ENCODE measurements at regions of chr9 and their contacts with region 1.

Region 1: GRCh38 chr9:107684224-107684623 is 194.7 kb upstream of the KLF4 start:
- DNase-seq: no peak
- ATAC-seq: no peak
- H3K4me3 ChIP-seq: no peak overlapping the region
- H3K27ac ChIP-seq: peak overlapping the region in 1 of 12 donors; percentile 68
- H3K4me1 ChIP-seq: peaks cover 0 to 22% (median 6%) of the 10 kb centered on the region in 12 donors
- H3K27me3 ChIP-seq: no peaks in the 10 kb centered on the region
- CTCF ChIP-seq: no peak
- POLR2A ChIP-seq: no peak

Region 2: GRCh38 chr9:107721705-107722245 is 37.6 kb after region 1 on chr9:
- intact Hi-C with region 1: loop called in 1 of 10 experiments (anchors 5 kb)
- DNase-seq: no peak
- ATAC-seq: no peak
- H3K4me3 ChIP-seq: no peak overlapping the region
- H3K27ac ChIP-seq: no peak overlapping the region
- H3K4me1 ChIP-seq: peaks cover 0 to 1% (median 0%) of the 10 kb centered on the region in 12 donors
- H3K27me3 ChIP-seq: no peaks in the 10 kb centered on the region
- CTCF ChIP-seq: no peak
- POLR2A ChIP-seq: no peak

Region 3: DNA sequence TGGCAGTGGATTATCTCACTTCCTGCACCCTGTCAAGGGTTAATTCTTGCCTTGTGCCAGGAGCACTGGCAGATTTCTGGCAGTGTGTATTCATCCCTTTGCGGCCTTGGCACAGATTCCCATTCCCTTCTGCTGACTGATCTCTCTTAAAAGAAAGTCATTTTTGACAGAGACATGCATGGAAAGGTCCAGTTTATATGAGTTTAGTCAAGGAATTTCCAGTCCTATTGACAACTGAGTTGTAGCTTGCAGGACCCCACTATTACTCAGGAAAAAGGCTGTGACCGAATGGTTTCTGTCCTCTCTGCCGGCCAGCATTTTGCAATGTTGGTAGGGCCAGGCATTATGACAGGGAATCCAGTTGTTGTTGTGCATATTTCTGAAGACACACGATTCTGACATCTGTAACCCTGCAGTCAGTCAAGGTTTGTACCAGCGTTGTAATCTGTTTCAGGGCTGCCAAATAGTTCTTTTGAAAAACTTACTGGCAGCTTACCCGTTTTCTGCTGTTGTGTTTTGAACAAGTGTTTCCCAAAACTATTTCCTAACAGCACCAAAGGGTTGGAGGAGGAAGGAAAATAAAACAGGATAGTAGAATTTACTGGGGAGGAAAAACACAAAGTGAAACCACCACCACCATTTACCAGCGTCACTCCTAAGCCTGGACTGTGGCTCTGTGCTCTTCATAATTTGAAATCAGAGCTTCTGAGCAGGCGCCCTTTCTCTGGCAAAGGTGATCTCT is 48.7 kb after region 1 on chr9:
- intact Hi-C with region 1: loop called in 1 of 10 experiments (anchors 10 kb)
- DNase-seq: peak in 3 of 5 donors; percentile 37 to 59 (median 55)
- ATAC-seq: peak; percentile 38 to 74 (median 62)
- H3K4me3 ChIP-seq: peak overlapping the region in 10 of 12 donors; percentile 0 to 38 (median 13)
- H3K27ac ChIP-seq: peak overlapping the region; percentile 66 to 91 (median 83)
- H3K4me1 ChIP-seq: peaks cover 0 to 37% (median 26%) of the 10 kb centered on the region in 12 donors
- H3K27me3 ChIP-seq: no peaks in the 10 kb centered on the region
- CTCF ChIP-seq: no peak
- POLR2A ChIP-seq: no peak

Region 4: GRCh38 chr9:107768224-107768623 is 84.0 kb after region 1 on chr9:
- intact Hi-C with region 1: loop called in 1 of 10 experiments (anchors 5 kb)
- DNase-seq: peak in 4 of 5 donors; percentile 54 to 71 (median 65)
- ATAC-seq: peak; percentile 91 to 98 (median 93)
- H3K4me3 ChIP-seq: no peak overlapping the region
- H3K27ac ChIP-seq: peak overlapping the region; percentile 5 to 79 (median 63)
- H3K4me1 ChIP-seq: peaks cover 0 to 18% (median 9%) of the 10 kb centered on the region in 12 donors
- H3K27me3 ChIP-seq: no peaks in the 10 kb centered on the region
- CTCF ChIP-seq: no peak
- POLR2A ChIP-seq: no peak